MCF 10A (cell line): ENCODE measurements at regions of chr4 and their contacts with region 1.

Region 1: GRCh38 chr4:184100297-184100885 is 117.3 kb downstream of the ENPP6 start:
- DNase-seq: peak; percentile 37
- H3K4me3 Mint-ChIP-seq: no peak overlapping the region
- H3K27ac Mint-ChIP-seq: no peak overlapping the region
- H3K4me1 Mint-ChIP-seq: no peaks in the 10 kb centered on the region
- H3K27me3 Mint-ChIP-seq: no peaks in the 10 kb centered on the region
- CTCF ChIP-seq: peak; percentile 70

Region 2: GRCh38 chr4:182938205-182938645 is 1162.2 kb before region 1 on chr4:
- CTCF ChIA-PET with region 1: no interaction called
- POLR2A ChIA-PET with region 1: no interaction called
- intact Hi-C with region 1: no loop called
- DNase-seq: peak; percentile 77
- H3K4me3 Mint-ChIP-seq: no peak overlapping the region
- H3K27ac Mint-ChIP-seq: no peak overlapping the region
- H3K4me1 Mint-ChIP-seq: peaks cover 17% of the 10 kb centered on the region
- H3K27me3 Mint-ChIP-seq: peaks cover 19% of the 10 kb centered on the region
- CTCF ChIP-seq: peak; percentile 95

Region 3: DNA sequence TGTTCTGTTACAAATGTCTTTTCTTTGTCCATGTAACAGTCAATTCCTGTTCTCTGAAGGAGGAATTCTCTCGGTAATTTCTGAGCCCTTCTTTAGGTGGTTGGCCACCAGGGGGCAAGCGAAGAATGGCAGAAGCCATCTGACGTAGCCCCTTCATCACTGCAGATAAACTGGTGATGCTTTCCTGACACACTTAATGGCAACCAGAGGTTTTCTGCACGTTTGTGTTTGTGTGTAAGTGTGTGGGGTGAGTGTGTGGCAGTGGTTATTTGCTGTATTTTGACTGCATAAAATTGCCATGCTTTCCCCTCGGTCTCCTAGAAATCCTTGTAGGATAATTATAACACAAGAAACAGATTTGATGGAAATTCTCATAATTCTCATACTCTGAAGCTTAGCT is 260.1 kb before region 1 on chr4:
- CTCF ChIA-PET with region 1: interaction called, 52 read pairs
- POLR2A ChIA-PET with region 1: no interaction called
- intact Hi-C with region 1: loop called (anchors 1 kb)
- DNase-seq: peak; percentile 81
- H3K4me3 Mint-ChIP-seq: no peak overlapping the region
- H3K27ac Mint-ChIP-seq: no peak overlapping the region
- H3K4me1 Mint-ChIP-seq: no peaks in the 10 kb centered on the region
- H3K27me3 Mint-ChIP-seq: no peaks in the 10 kb centered on the region
- CTCF ChIP-seq: peak; percentile 79

Region 4: DNA sequence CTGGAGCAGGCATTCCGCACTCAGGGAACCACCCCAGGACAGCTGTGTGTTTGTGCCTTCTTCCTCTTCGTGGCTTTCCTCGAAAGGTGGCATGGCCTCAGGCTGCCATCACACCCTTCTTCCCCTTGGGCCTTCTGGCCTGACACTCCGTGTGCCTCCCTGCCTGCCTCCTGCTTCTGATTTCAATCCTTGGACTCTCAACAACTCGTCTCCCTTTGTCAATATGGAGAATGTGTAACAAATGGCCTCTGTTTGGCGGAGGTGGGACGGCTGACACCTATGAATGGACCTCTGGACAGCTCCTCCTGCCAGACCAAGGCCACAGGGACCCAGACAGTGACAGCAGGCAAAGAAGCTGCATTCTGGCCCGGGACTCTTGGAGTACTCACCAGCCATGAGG is 19.7 kb before region 1 on chr4:
- CTCF ChIA-PET with region 1: interaction called, 12 read pairs
- POLR2A ChIA-PET with region 1: no interaction called
- intact Hi-C with region 1: no loop called
- DNase-seq: no peak
- H3K4me3 Mint-ChIP-seq: no peak overlapping the region
- H3K27ac Mint-ChIP-seq: no peak overlapping the region
- H3K4me1 Mint-ChIP-seq: no peaks in the 10 kb centered on the region
- H3K27me3 Mint-ChIP-seq: no peaks in the 10 kb centered on the region
- CTCF ChIP-seq: no peak

Region 5: GRCh38 chr4:184111233-184111832 is 10.9 kb after region 1 on chr4:
- CTCF ChIA-PET with region 1: interaction called, 11 read pairs
- POLR2A ChIA-PET with region 1: no interaction called
- intact Hi-C with region 1: no loop called
- DNase-seq: no peak
- H3K4me3 Mint-ChIP-seq: no peak overlapping the region
- H3K27ac Mint-ChIP-seq: no peak overlapping the region
- H3K4me1 Mint-ChIP-seq: no peaks in the 10 kb centered on the region
- H3K27me3 Mint-ChIP-seq: peaks cover 5% of the 10 kb centered on the region
- CTCF ChIP-seq: no peak

Region 6: DNA sequence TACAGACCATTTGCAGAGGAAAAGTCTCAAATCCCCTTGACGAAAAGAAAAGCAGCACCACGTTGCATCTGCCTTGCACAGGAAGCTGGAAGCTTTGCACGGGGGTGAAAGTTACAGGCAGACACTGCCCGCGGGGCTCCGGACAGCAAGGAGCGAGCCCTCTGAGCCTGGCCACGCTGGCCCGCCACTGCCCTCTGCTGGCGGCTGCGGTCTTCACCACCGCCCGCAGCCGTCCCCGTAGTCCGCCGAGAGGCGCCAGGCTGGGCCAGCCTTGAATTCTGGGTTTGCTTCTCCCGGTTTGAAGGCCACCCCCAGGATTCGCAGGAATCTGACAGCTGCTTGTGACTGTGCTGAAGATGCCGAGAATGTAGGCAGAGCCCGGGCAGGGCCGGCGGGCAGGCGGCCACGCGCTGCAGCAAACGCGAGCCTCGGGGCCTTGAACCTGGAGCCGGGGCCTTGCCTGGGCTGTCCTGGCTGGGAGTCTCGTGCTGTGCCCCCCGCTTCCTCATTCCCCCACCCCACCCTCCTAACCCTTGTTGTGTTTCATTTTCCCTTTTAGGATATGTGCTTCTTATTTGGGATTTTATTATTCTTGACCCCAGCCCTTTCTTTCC is 68.1 kb after region 1 on chr4:
- CTCF ChIA-PET with region 1: interaction called, 4 read pairs
- POLR2A ChIA-PET with region 1: no interaction called
- intact Hi-C with region 1: loop called (anchors 5 kb)
- DNase-seq: peak; percentile 61
- H3K4me3 Mint-ChIP-seq: no peak overlapping the region
- H3K27ac Mint-ChIP-seq: no peak overlapping the region
- H3K4me1 Mint-ChIP-seq: no peaks in the 10 kb centered on the region
- H3K27me3 Mint-ChIP-seq: no peaks in the 10 kb centered on the region
- CTCF ChIP-seq: peak; percentile 95